T-cell (primary cell): ENCODE measurements at regions of chr14 and their contacts with region 1.

Region 1: DNA sequence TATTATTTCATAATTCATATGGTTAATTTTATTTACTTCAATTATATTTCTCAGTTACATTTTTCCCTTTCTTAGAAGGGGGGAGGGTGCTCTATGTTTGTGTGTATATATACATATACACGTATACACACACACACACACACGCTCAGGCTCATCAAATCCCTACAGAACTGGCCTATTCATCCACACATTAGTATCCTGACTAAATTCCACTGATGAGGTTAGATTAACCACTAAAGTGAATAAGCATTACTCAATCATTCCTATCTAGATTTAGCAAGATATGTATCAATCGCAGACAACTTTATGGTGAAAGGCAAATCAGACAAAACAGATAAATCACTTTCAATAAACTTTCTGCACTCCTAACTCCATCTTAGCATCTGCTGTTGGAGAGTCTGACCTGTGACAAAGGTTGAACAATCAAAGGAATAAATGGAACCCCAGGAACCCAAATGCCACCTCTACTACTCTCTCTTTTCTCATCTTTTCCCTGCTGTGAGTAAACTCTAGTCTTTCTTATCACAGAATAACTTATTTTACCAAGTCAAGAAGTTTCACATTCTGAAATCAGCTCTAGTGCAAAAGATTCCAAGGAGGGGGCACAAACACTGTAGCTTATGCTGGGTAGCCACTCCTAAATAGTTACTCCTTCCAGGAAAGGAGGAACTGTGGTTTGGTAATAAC is 67.6 kb downstream of the RALGAPA1 start:
- DNase-seq: no peak
- ATAC-seq: no peak
- H3K4me3 ChIP-seq: no peak overlapping the region
- H3K4me3 Mint-ChIP-seq: no peak overlapping the region
- H3K27ac ChIP-seq: no peak overlapping the region
- H3K27ac Mint-ChIP-seq: no peak overlapping the region
- H3K4me1 ChIP-seq: no peaks in the 10 kb centered on the region
- H3K4me1 Mint-ChIP-seq: peaks cover 0 to 1% (median 0%) of the 10 kb centered on the region in 3 donors
- H3K27me3 ChIP-seq: no peaks in the 10 kb centered on the region
- H3K27me3 Mint-ChIP-seq: no peaks in the 10 kb centered on the region

Region 2: GRCh38 chr14:34646570-34647255 is 1094.8 kb before region 1 on chr14:
- CTCF ChIA-PET with region 1: no interaction called
- POLR2A ChIA-PET with region 1: interaction called in 1 of 2 experiments, 12 read pairs
- DNase-seq: no peak
- ATAC-seq: no peak
- H3K4me3 ChIP-seq: no peak overlapping the region
- H3K4me3 Mint-ChIP-seq: no peak overlapping the region
- H3K27ac ChIP-seq: no peak overlapping the region
- H3K27ac Mint-ChIP-seq: no peak overlapping the region
- H3K4me1 ChIP-seq: no peaks in the 10 kb centered on the region
- H3K4me1 Mint-ChIP-seq: no peaks in the 10 kb centered on the region
- H3K27me3 ChIP-seq: no peaks in the 10 kb centered on the region
- H3K27me3 Mint-ChIP-seq: no peaks in the 10 kb centered on the region

Region 3: GRCh38 chr14:35712466-35712865 is 29.0 kb before region 1 on chr14:
- CTCF ChIA-PET with region 1: no interaction called
- POLR2A ChIA-PET with region 1: no interaction called
- DNase-seq: no peak
- ATAC-seq: no peak
- H3K4me3 ChIP-seq: no peak overlapping the region
- H3K4me3 Mint-ChIP-seq: no peak overlapping the region
- H3K27ac ChIP-seq: no peak overlapping the region
- H3K27ac Mint-ChIP-seq: no peak overlapping the region
- H3K4me1 ChIP-seq: no peaks in the 10 kb centered on the region
- H3K4me1 Mint-ChIP-seq: no peaks in the 10 kb centered on the region
- H3K27me3 ChIP-seq: no peaks in the 10 kb centered on the region
- H3K27me3 Mint-ChIP-seq: no peaks in the 10 kb centered on the region

Region 4: DNA sequence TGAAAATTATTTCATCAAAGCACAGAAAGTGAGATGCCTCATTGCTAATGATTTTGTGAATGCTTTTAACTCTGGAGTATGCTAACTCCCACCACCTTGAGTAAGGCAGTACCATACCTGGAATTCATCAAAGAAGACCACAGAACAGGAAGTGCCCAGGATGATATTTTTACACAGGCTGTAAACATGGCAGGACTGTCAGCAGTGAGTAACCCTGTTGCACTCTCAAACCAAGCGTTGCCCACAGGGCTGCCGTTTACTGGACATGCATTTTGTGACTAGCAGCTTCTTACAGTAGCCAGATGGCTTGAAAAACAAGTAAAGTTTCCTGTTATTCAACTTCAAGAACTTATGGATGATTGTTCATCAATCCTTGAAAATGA is 25.2 kb after region 1 on chr14:
- CTCF ChIA-PET with region 1: no interaction called
- POLR2A ChIA-PET with region 1: no interaction called
- DNase-seq: peak in 1 of 35 experiments; percentile 8
- ATAC-seq: peak in 3 of 4 experiments; percentile 73 to 82 (median 73)
- H3K4me3 ChIP-seq: no peak overlapping the region
- H3K4me3 Mint-ChIP-seq: peak overlapping the region in 1 of 3 donors; percentile 28
- H3K27ac ChIP-seq: no peak overlapping the region
- H3K27ac Mint-ChIP-seq: peak overlapping the region in 1 of 2 donors; percentile 44
- H3K4me1 ChIP-seq: peaks cover 6 to 8% of the 10 kb centered on the region in 2 experiments
- H3K4me1 Mint-ChIP-seq: peaks cover 25 to 28% (median 26%) of the 10 kb centered on the region in 3 donors
- H3K27me3 ChIP-seq: no peaks in the 10 kb centered on the region
- H3K27me3 Mint-ChIP-seq: no peaks in the 10 kb centered on the region